ENCODE measurements at regions of chr20 and their contacts with region 1.

Region 1: DNA sequence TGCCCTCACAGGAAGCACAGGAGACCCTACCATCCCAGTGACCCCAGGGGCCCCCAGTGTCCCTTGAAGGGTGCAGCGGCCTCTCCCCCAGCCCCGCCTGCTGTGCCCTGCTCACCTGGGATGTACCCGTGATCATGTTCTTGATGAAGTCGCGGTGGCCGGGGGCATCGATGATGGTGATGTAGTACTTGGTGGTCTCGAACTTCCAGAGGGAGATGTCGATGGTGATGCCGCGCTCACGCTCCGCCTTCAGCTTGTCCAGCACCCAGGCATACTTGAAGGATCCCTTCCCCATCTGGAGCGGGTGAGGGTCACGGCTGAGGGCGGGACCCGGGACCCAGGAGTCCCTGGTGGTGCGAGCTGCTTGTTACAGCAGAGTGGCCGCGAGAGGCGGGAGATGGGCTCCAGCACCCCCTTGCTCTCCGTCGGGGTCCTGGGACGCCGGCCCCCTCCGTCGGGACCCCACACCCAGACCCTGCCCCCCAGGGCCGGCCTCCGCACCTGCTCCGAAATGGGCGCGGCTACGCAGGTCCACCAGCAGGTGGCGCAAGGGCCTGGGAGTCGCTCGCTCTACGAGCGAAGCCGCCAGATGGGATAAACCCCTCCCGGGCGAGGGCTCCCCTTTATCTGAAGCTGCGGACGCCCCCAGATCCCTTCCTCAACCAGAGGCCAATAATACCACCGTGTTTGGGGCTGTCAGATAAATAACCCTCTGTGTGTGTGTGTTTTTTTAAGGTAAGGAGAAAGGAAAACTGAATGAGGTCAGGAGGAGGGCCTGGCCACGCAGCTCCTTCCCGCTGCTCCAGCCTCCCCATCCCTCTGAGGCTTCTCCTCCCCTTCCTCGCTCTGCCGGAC is 2.9 kb downstream of the EEF1A2 start:
- DNase-seq: peak in 1 of 2 experiments; percentile 92
- H3K4me3 ChIP-seq: peak overlapping the region in 2 of 4 experiments; percentile 10 to 41; a peak in 4 of 8 replicates
- H3K27ac ChIP-seq: no peak overlapping the region
- H3K4me1 ChIP-seq: peaks cover 0 to 23% (median 12%) of the 10 kb centered on the region in 4 experiments; a peak in 6 of 7 replicates
- H3K27me3 ChIP-seq: peaks cover 11 to 41% (median 35%) of the 10 kb centered on the region in 4 experiments
- CTCF ChIP-seq: peak; percentile 83 to 88 (median 87)
- EP300 ChIP-seq: no peak
- POLR2A ChIP-seq: no peak
- RAD21 ChIP-seq: peak; percentile 51 to 67; a peak in 3 of 4 replicates

Region 2: GRCh38 chr20:63442100-63442493 is 53.9 kb before region 1 on chr20:
- CTCF ChIA-PET with region 1: interaction called, 11 read pairs
- POLR2A ChIA-PET with region 1: no interaction called
- DNase-seq: peak in 1 of 2 experiments; percentile 79
- H3K4me3 ChIP-seq: no peak overlapping the region
- H3K27ac ChIP-seq: no peak overlapping the region
- H3K4me1 ChIP-seq: peaks cover 0 to 5% (median 1%) of the 10 kb centered on the region in 4 experiments; a peak in 2 of 7 replicates
- H3K27me3 ChIP-seq: no peaks in the 10 kb centered on the region
- CTCF ChIP-seq: peak; percentile 59 to 76 (median 59)
- EP300 ChIP-seq: no peak
- POLR2A ChIP-seq: no peak
- RAD21 ChIP-seq: peak; percentile 57 to 72

Region 3: GRCh38 chr20:63475206-63475605 is 20.8 kb before region 1 on chr20:
- CTCF ChIA-PET with region 1: interaction called, 14 read pairs
- POLR2A ChIA-PET with region 1: interaction called, 4 read pairs
- DNase-seq: no peak
- H3K4me3 ChIP-seq: no peak overlapping the region
- H3K27ac ChIP-seq: no peak overlapping the region
- H3K4me1 ChIP-seq: peaks cover 0 to 21% (median 8%) of the 10 kb centered on the region in 4 experiments; a peak in 6 of 7 replicates
- H3K27me3 ChIP-seq: peaks cover 0 to 16% (median 5%) of the 10 kb centered on the region in 4 experiments; a peak in 4 of 7 replicates
- CTCF ChIP-seq: no peak
- EP300 ChIP-seq: no peak
- POLR2A ChIP-seq: no peak
- RAD21 ChIP-seq: 0 out of 4 replicates have a peak, but pooled peaks of 1 of the 2 experiments have one; percentile 5

Region 4: GRCh38 chr20:63508072-63508768 is 12.3 kb after region 1 on chr20:
- CTCF ChIA-PET with region 1: interaction called, 12 read pairs
- POLR2A ChIA-PET with region 1: no interaction called
- DNase-seq: no peak
- H3K4me3 ChIP-seq: no peak overlapping the region
- H3K27ac ChIP-seq: no peak overlapping the region
- H3K4me1 ChIP-seq: no peaks in the 10 kb centered on the region
- H3K27me3 ChIP-seq: no peaks in the 10 kb centered on the region; a peak in 1 of 7 replicates
- CTCF ChIP-seq: no peak
- EP300 ChIP-seq: no peak
- POLR2A ChIP-seq: no peak
- RAD21 ChIP-seq: no peak

Region 5: GRCh38 chr20:63537525-63538203 is 41.7 kb after region 1 on chr20:
- CTCF ChIA-PET with region 1: interaction called, 23 read pairs
- POLR2A ChIA-PET with region 1: no interaction called
- DNase-seq: peak; percentile 71 to 97
- H3K4me3 ChIP-seq: peak overlapping the region in 3 of 4 experiments; percentile 24 to 48 (median 25); a peak in 4 of 8 replicates
- H3K27ac ChIP-seq: no peak overlapping the region
- H3K4me1 ChIP-seq: peaks cover 0 to 23% (median 3%) of the 10 kb centered on the region in 4 experiments; a peak in 5 of 7 replicates
- H3K27me3 ChIP-seq: no peaks in the 10 kb centered on the region
- CTCF ChIP-seq: peak; percentile 92 to 95 (median 92)
- EP300 ChIP-seq: no peak
- POLR2A ChIP-seq: no peak
- RAD21 ChIP-seq: peak; percentile 96 to 98